K562 (cell line): ENCODE measurements at regions of chr9 and their contacts with region 1.

Region 1: GRCh38 chr9:110370316-110370715 is 32.7 kb upstream of the TXNDC8 start:
- DNase-seq: peak in 2 of 4 experiments; percentile 38 to 47
- ATAC-seq: peak; percentile 25; the same call in 2 of the 3 replicates
- H3K4me3 ChIP-seq: no peak overlapping the region
- H3K27ac ChIP-seq: no peak overlapping the region
- H3K4me1 ChIP-seq: peaks cover 14 to 32% of the 10 kb centered on the region in 2 experiments
- H3K27me3 ChIP-seq: no peaks in the 10 kb centered on the region
- CTCF ChIP-seq: no peak
- EP300 ChIP-seq: peak; percentile 82
- POLR2A ChIP-seq: no peak
- RAD21 ChIP-seq: no peak

Region 2: DNA sequence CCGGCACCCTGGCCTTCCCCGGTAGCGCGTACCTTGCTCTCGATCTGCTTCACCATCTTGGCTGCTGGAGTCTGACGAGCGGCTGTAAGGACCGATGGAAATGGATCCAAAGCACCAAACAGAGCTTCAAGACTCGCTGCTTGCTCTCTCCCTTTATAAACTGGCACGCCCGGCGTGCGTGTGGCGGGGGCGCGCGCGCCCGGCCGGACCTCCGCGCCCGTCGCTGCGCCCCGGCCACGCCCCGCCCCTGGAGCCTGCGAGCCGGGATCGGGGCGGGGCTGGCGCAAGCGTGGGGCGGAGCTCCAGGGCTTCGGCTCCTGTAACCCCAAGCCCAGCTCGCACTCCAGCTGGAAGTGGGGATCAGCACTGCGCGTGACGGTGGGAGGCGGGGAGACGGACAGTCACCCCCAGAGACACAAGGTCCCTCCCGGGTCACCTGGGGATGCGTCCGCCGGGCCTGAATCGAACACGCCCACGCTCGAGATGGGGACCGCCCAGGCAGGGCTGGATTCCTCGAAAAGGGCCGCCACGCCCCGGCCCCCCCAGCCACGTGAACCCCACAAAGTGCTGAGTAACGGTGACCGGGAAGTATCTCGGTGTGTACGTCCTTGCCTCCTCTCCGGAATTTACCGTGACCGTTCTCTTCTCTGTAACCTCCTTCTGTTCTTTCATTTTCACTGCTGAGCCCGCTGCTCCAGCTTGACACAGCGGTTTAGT is 113.8 kb before region 1 on chr9 and contains the start of gene TXN:
- CTCF ChIA-PET with region 1: no interaction called
- POLR2A ChIA-PET with region 1: no interaction called
- in situ Hi-C with region 1: no loop called
- intact Hi-C with region 1: loop called (anchors 5 kb)
- DNase-seq: peak; percentile 91 to 97 (median 93)
- ATAC-seq: peak; percentile 86
- H3K4me3 ChIP-seq: peak within 1 kb of the TSS; percentile 91
- H3K27ac ChIP-seq: peak within 1 kb of the TSS; percentile 97
- H3K4me1 ChIP-seq: peaks cover 15 to 39% of the 10 kb centered on the region in 2 experiments
- H3K27me3 ChIP-seq: no peaks in the 10 kb centered on the region
- CTCF ChIP-seq: no peak
- EP300 ChIP-seq: peak; percentile 82
- POLR2A ChIP-seq: peak; percentile 78
- RAD21 ChIP-seq: no peak
- polyA plus RNA-seq, gene TXN: 1,469 to 1,596 TPM

Region 3: GRCh38 chr9:110382741-110383140 is 12.4 kb after region 1 on chr9:
- CTCF ChIA-PET with region 1: no interaction called
- POLR2A ChIA-PET with region 1: interaction called, 11 read pairs
- in situ Hi-C with region 1: no loop called
- intact Hi-C with region 1: no loop called
- DNase-seq: no peak
- ATAC-seq: no peak
- H3K4me3 ChIP-seq: no peak overlapping the region
- H3K27ac ChIP-seq: no peak overlapping the region
- H3K4me1 ChIP-seq: no peaks in the 10 kb centered on the region
- H3K27me3 ChIP-seq: no peaks in the 10 kb centered on the region
- CTCF ChIP-seq: no peak
- EP300 ChIP-seq: no peak
- POLR2A ChIP-seq: no peak
- RAD21 ChIP-seq: no peak